Activated CD4-positive, alpha-beta memory T cell treated with anti-CD3 and anti-CD28 coated beads, Interleukin-2, amount 10 ng/mL, durations not matched to agents 7 days and 5 days (primary cell): ENCODE measurements at regions of chr21 and their contacts with region 1.

Region 1: GRCh38 chr21:33924079-33924765 is 8.6 kb upstream of the ATP5PO start:
- DNase-seq: peak; percentile 90
- H3K4me3 Mint-ChIP-seq: no peak overlapping the region
- H3K27ac Mint-ChIP-seq: no peak overlapping the region
- H3K4me1 Mint-ChIP-seq: peaks cover 18% of the 10 kb centered on the region
- H3K27me3 Mint-ChIP-seq: no peaks in the 10 kb centered on the region

Region 2: GRCh38 chr21:33871171-33871570 is 53.1 kb before region 1 on chr21:
- CTCF ChIA-PET with region 1: no interaction called
- POLR2A ChIA-PET with region 1: no interaction called
- DNase-seq: no peak
- H3K4me3 Mint-ChIP-seq: no peak overlapping the region
- H3K27ac Mint-ChIP-seq: no peak overlapping the region
- H3K4me1 Mint-ChIP-seq: no peaks in the 10 kb centered on the region
- H3K27me3 Mint-ChIP-seq: peaks cover 5% of the 10 kb centered on the region

Region 3: DNA sequence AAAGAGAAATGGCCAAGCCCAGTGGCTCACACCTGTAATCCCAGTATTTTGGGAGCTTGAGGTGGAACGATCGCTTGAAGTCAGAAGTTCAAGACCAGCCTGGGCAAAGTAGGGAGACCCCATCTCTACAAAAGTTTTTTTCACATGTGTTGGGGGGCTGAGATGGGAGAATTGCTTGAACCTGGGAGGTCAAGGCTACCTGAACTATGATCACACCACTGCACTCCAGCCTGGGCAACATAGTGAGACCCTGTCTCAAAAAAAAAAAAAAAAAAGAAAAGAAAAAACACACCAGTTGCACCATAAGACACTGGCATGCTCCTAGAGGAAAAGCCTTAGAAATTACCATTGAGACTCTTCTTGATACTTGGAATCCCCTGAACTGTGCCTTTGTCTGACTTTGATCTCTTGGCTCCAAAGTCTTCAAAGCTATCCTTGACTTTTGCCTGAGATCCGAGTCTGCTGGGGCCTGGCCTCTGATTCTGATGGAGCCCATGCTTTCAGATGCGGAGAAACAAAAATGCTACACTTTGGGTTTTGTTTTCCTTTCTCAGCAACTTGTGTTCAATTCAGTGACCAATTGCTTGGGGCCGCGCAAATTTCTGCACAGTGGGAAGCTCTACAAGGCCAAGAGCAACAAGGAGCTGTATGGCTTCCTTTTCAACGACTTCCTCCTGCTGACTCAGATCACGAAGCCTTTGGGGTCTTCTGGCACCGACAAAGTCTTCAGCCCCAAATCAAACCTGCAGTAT is 42.4 kb before region 1 on chr21:
- CTCF ChIA-PET with region 1: no interaction called
- POLR2A ChIA-PET with region 1: no interaction called
- DNase-seq: no peak
- H3K4me3 Mint-ChIP-seq: no peak overlapping the region
- H3K27ac Mint-ChIP-seq: no peak overlapping the region
- H3K4me1 Mint-ChIP-seq: no peaks in the 10 kb centered on the region
- H3K27me3 Mint-ChIP-seq: peaks cover 8% of the 10 kb centered on the region

Region 4: DNA sequence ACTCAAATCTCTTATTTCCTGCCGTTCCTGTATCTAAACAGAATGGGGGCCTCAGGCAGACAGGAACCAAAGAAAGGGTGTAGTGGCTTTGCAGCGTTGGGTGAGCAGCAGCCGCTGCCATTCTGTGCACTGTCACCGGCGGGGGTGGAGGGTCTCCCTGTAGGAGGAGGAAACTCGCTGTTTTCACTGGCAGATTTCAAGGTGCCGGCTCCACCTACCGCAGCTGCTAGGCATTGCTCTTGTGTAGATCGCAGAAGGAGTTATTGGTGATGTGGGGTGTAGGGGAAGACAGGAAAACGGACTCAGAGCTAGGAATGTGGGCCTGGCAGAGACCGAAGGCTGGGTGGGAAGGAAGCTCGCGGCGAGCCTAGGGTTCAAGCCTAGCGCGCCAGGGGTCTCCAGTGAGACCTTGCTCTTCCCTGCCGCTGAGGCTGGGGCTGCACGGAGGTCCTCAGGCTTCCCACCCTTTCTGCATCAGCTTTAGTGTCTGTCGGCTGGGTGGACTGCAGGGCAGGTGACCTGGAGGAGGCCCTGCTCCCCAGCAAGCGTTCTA is 29.4 kb before region 1 on chr21:
- CTCF ChIA-PET with region 1: no interaction called
- POLR2A ChIA-PET with region 1: no interaction called
- DNase-seq: peak; percentile 41
- H3K4me3 Mint-ChIP-seq: no peak overlapping the region
- H3K27ac Mint-ChIP-seq: no peak overlapping the region
- H3K4me1 Mint-ChIP-seq: peaks cover 14% of the 10 kb centered on the region
- H3K27me3 Mint-ChIP-seq: peaks cover 14% of the 10 kb centered on the region

Region 5: GRCh38 chr21:33940164-33940880 is 16.1 kb after region 1 on chr21:
- CTCF ChIA-PET with region 1: interaction called, 16 read pairs
- POLR2A ChIA-PET with region 1: interaction called, 4 read pairs
- DNase-seq: no peak
- H3K4me3 Mint-ChIP-seq: no peak overlapping the region
- H3K27ac Mint-ChIP-seq: peak overlapping the region; percentile 34
- H3K4me1 Mint-ChIP-seq: peaks cover 66% of the 10 kb centered on the region
- H3K27me3 Mint-ChIP-seq: no peaks in the 10 kb centered on the region

Region 6: GRCh38 chr21:33961061-33961460 is 36.8 kb after region 1 on chr21:
- CTCF ChIA-PET with region 1: interaction called, 11 read pairs
- POLR2A ChIA-PET with region 1: interaction called, 3 read pairs
- DNase-seq: no peak
- H3K4me3 Mint-ChIP-seq: no peak overlapping the region
- H3K27ac Mint-ChIP-seq: no peak overlapping the region
- H3K4me1 Mint-ChIP-seq: peaks cover 8% of the 10 kb centered on the region
- H3K27me3 Mint-ChIP-seq: no peaks in the 10 kb centered on the region

Region 7: GRCh38 chr21:34073032-34073869 is 149.0 kb after region 1 on chr21 and contains the starts of genes MRPS6 and SLC5A3:
- CTCF ChIA-PET with region 1: interaction called, 31 read pairs
- POLR2A ChIA-PET with region 1: interaction called, 15 read pairs
- DNase-seq: peak; percentile 76
- H3K4me3 Mint-ChIP-seq: peak within 1 kb of the TSS; percentile 85
- H3K27ac Mint-ChIP-seq: peak within 1 kb of the TSS; percentile 71
- H3K4me1 Mint-ChIP-seq: peaks cover 45% of the 10 kb centered on the region
- H3K27me3 Mint-ChIP-seq: no peaks in the 10 kb centered on the region
- total RNA-seq, gene MRPS6: 75.2 to 79.2 TPM
- total RNA-seq, gene SLC5A3: 23.3 to 26.0 TPM

Region 8: GRCh38 chr21:34202553-34203372 is 278.5 kb after region 1 on chr21:
- CTCF ChIA-PET with region 1: interaction called, 11 read pairs
- POLR2A ChIA-PET with region 1: no interaction called
- DNase-seq: no peak
- H3K4me3 Mint-ChIP-seq: peak overlapping the region; percentile 44
- H3K27ac Mint-ChIP-seq: no peak overlapping the region
- H3K4me1 Mint-ChIP-seq: peaks cover 50% of the 10 kb centered on the region
- H3K27me3 Mint-ChIP-seq: peaks cover 3% of the 10 kb centered on the region

Region 9: DNA sequence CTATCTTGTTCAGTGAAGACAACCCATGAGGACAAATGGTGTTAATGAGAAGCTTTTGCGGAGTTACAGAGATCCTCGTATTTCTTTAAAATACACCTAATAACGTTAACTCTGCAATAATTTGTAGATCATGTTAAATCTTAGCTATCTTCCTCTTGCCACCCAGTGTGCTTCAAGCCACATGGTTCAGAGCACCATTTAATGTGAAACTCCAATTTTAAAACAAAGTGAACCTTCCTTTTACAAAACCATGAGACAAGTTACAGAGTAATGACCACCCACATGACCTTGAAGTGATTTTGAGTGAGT is 437.9 kb after region 1 on chr21:
- CTCF ChIA-PET with region 1: interaction called, 18 read pairs
- POLR2A ChIA-PET with region 1: no interaction called
- DNase-seq: no peak
- H3K4me3 Mint-ChIP-seq: no peak overlapping the region
- H3K27ac Mint-ChIP-seq: no peak overlapping the region
- H3K4me1 Mint-ChIP-seq: peaks cover 6% of the 10 kb centered on the region
- H3K27me3 Mint-ChIP-seq: peaks cover 22% of the 10 kb centered on the region